IMR-90 (cell line): ENCODE measurements at regions of chr4 and their contacts with region 1.

Region 1: GRCh38 chr4:53908661-53909078 is 155.7 kb downstream of the CHIC2 start:
- DNase-seq: peak; percentile 97
- ATAC-seq: peak; percentile 70
- H3K4me3 ChIP-seq: peak overlapping the region; percentile 22; the same call in 1 of the 2 replicates
- H3K27ac ChIP-seq: peak overlapping the region; percentile 96
- H3K4me1 ChIP-seq: peaks cover 11% of the 10 kb centered on the region
- H3K27me3 ChIP-seq: no peaks in the 10 kb centered on the region
- CTCF ChIP-seq: peak; percentile 95
- POLR2A ChIP-seq: peak; percentile 48; the same call in 1 of the 2 replicates
- RAD21 ChIP-seq: peak; percentile 93

Region 2: DNA sequence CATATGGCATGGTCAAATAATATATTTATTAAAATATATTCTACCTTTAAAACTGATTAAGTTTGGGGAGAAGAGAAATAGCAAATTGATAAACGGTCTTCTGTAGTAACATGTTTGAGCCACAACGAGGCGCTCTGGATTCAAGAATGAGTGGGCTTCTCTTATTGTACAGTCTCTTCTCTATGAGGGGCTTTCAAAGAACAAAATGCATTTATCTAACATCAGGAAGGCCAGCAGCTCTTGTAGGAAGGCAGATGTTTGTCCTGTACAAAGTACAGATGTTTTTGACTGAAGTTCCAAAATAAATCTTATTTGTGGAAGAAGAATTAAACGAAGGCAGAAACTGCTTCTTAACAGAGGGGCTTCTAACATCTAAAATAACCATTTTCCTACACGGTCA is 893.0 kb before region 1 on chr4:
- CTCF ChIA-PET with region 1: interaction called, 5 read pairs
- POLR2A ChIA-PET with region 1: no interaction called
- dilution Hi-C with region 1: no loop called
- in situ Hi-C with region 1: loop called (anchors 10 kb)
- intact Hi-C with region 1: loop called (anchors 1 kb)
- DNase-seq: peak; percentile 81
- ATAC-seq: peak; percentile 44; the same call in 1 of the 2 replicates
- H3K4me3 ChIP-seq: no peak overlapping the region
- H3K27ac ChIP-seq: no peak overlapping the region
- H3K4me1 ChIP-seq: peaks cover 28% of the 10 kb centered on the region
- H3K27me3 ChIP-seq: no peaks in the 10 kb centered on the region
- CTCF ChIP-seq: peak; percentile 81
- POLR2A ChIP-seq: no peak
- RAD21 ChIP-seq: peak; percentile 93

Region 3: GRCh38 chr4:53476232-53477037 is 432.2 kb before region 1 on chr4:
- CTCF ChIA-PET with region 1: no interaction called
- POLR2A ChIA-PET with region 1: no interaction called
- dilution Hi-C with region 1: no loop called
- in situ Hi-C with region 1: no loop called
- intact Hi-C with region 1: loop called (anchors 5 kb)
- DNase-seq: peak; percentile 98
- ATAC-seq: peak; percentile 87
- H3K4me3 ChIP-seq: no peak overlapping the region
- H3K27ac ChIP-seq: peak overlapping the region; percentile 93
- H3K4me1 ChIP-seq: peaks cover 20% of the 10 kb centered on the region
- H3K27me3 ChIP-seq: no peaks in the 10 kb centered on the region
- CTCF ChIP-seq: no peak
- POLR2A ChIP-seq: no peak
- RAD21 ChIP-seq: no peak

Region 4: DNA sequence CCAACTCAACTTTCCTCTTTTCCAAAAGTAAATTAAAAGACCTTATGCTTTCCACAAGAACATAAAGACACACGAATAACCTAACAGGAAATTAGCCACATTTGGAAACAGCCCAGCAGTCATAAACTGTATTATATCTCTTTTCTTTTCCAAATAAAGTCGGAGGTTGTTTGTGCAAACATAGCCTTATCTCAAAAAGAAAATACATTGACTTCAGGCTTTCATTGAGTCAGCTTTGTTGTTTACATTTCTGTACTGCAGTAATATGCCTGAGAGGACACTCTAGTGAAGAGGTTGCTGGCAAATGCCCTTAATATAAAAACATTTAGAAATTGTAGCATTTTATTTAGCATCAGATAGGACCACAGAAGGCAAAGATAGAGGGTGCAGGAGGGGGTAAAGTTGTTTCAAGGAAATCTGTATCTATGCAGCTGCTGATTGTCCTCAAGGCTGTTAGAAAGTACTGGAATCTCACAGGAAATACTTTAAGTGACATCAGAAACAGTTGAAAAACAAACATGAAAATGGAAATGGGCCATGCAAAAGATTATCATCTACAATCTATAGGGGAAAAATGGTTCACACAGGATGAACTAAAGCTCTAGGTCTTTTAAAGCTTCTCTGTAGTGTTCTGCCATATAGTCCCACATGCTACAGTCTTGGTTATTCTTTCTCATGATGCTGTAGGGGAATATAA is 331.8 kb before region 1 on chr4:
- CTCF ChIA-PET with region 1: no interaction called
- POLR2A ChIA-PET with region 1: no interaction called
- dilution Hi-C with region 1: no loop called
- in situ Hi-C with region 1: no loop called
- intact Hi-C with region 1: loop called (anchors 2 kb)
- DNase-seq: peak; percentile 90
- ATAC-seq: peak; percentile 76
- H3K4me3 ChIP-seq: no peak overlapping the region
- H3K27ac ChIP-seq: peak overlapping the region; percentile 100
- H3K4me1 ChIP-seq: peaks cover 32% of the 10 kb centered on the region
- H3K27me3 ChIP-seq: no peaks in the 10 kb centered on the region
- CTCF ChIP-seq: no peak
- POLR2A ChIP-seq: no peak
- RAD21 ChIP-seq: no peak

Region 5: DNA sequence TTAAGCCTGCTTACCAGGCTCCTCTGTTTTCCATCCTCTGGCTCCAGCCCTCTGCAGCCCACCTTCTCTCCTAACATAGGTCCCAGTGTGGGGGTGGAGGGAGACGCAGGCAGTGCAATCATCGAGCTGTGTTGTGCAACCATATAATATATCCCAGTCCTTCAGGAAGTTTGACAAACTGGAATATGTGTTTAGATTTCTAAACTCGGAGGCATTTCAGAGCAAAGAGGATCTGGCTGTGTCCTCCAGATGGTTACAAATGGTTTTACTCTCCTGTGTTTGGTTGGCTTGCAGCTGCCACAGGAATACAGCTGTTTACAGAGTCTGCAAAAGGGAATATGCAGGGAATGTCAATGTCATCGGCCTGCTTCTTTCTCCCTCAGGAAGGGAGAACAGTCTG is 122.0 kb before region 1 on chr4:
- CTCF ChIA-PET with region 1: interaction called, 3 read pairs
- POLR2A ChIA-PET with region 1: no interaction called
- dilution Hi-C with region 1: no loop called
- in situ Hi-C with region 1: no loop called
- intact Hi-C with region 1: loop called (anchors 1 kb)
- DNase-seq: peak; percentile 93
- ATAC-seq: peak; percentile 77
- H3K4me3 ChIP-seq: no peak overlapping the region
- H3K27ac ChIP-seq: peak overlapping the region; percentile 93
- H3K4me1 ChIP-seq: peaks cover 39% of the 10 kb centered on the region
- H3K27me3 ChIP-seq: no peaks in the 10 kb centered on the region
- CTCF ChIP-seq: no peak
- POLR2A ChIP-seq: no peak
- RAD21 ChIP-seq: no peak

Region 6: GRCh38 chr4:54064295-54065111 is 155.8 kb after region 1 on chr4 and contains the start of gene CHIC2:
- CTCF ChIA-PET with region 1: no interaction called
- POLR2A ChIA-PET with region 1: no interaction called
- dilution Hi-C with region 1: no loop called
- in situ Hi-C with region 1: no loop called
- intact Hi-C with region 1: loop called (anchors 2 kb)
- DNase-seq: peak; percentile 92
- ATAC-seq: peak; percentile 88
- H3K4me3 ChIP-seq: peak within 1 kb of the TSS; percentile 81
- H3K27ac ChIP-seq: peak within 1 kb of the TSS; percentile 97
- H3K4me1 ChIP-seq: peaks cover 13% of the 10 kb centered on the region; the same call in 1 of the 2 replicates
- H3K27me3 ChIP-seq: no peaks in the 10 kb centered on the region
- CTCF ChIP-seq: no peak
- POLR2A ChIP-seq: peak; percentile 96
- RAD21 ChIP-seq: no peak
- total RNA-seq, gene CHIC2: 26.3 and 65.0 TPM in 2 replicates

Region 7: GRCh38 chr4:54233277-54233696 is 324.6 kb after region 1 on chr4:
- CTCF ChIA-PET with region 1: interaction called, 13 read pairs
- POLR2A ChIA-PET with region 1: interaction called, 8 read pairs
- dilution Hi-C with region 1: no loop called
- in situ Hi-C with region 1: loop called (anchors 5 kb)
- intact Hi-C with region 1: loop called (anchors 1 kb)
- DNase-seq: peak; percentile 85
- ATAC-seq: peak; percentile 36
- H3K4me3 ChIP-seq: peak overlapping the region; percentile 89
- H3K27ac ChIP-seq: peak overlapping the region; percentile 94
- H3K4me1 ChIP-seq: peaks cover 2% of the 10 kb centered on the region
- H3K27me3 ChIP-seq: no peaks in the 10 kb centered on the region
- CTCF ChIP-seq: peak; percentile 85
- POLR2A ChIP-seq: no peak
- RAD21 ChIP-seq: peak; percentile 92